ENCODE measurements at regions of chr7 and their contacts with region 1.

Region 1: DNA sequence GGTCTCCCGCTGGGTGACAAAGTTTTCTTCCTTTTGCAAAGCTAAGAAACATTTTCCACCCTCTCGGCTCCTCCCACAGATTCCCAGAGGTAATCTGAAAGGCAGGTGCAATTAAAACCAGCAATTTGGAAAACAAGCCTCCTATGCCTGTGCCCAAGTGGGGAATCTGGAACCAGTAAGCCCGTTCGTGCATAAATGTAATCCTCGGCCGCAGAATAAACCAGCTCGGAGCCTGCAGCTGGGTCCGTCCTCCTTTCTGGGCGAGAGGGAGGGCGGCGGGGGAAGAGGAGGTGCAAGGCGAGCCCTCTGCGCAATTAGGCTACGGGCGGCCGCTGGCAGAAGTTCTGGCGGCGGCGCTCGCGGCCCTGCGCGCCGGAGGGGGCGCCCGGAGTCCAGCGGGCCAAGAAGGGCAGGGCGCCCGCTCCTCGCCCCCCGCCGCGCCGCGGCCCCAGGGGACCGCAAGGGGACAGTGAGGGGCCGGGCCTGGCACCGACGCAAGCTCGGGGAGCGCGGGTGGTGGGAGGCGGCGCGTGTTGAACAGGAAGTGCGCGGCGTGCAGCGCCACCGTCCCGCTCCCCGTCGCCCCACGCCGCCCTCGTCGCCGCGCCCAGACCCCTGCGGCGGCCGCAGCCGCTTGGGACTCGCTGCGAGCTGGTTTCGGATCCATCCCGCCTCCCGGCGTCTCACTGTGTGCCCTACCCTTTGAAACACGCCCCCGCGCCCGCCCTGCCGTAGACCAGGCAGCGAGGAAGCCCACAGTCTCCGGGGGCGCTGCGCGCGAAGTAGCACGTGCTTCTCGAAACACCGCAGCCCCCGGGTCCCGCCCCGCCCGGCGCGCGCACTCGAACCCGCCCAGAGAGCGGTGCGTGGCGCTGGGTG is at the start of gene PRKAG2:
- DNase-seq: peak; percentile 53 to 85 (median 78)
- ATAC-seq: peak; percentile 59
- H3K4me3 ChIP-seq: peak within 1 kb of the TSS; percentile 71 to 95
- H3K4me3 Mint-ChIP-seq: peak within 1 kb of the TSS; percentile 97
- H3K27ac ChIP-seq: peak within 1 kb of the TSS; percentile 53 to 67
- H3K27ac Mint-ChIP-seq: peak within 1 kb of the TSS; percentile 92
- H3K4me1 ChIP-seq: peaks cover 20% of the 10 kb centered on the region
- H3K4me1 Mint-ChIP-seq: peaks cover 25% of the 10 kb centered on the region
- H3K27me3 ChIP-seq: no peaks in the 10 kb centered on the region
- H3K27me3 Mint-ChIP-seq: no peaks in the 10 kb centered on the region
- CTCF ChIP-seq: peak; percentile 27
- total RNA-seq, gene PRKAG2: 41.3 to 41.8 TPM

Region 2: DNA sequence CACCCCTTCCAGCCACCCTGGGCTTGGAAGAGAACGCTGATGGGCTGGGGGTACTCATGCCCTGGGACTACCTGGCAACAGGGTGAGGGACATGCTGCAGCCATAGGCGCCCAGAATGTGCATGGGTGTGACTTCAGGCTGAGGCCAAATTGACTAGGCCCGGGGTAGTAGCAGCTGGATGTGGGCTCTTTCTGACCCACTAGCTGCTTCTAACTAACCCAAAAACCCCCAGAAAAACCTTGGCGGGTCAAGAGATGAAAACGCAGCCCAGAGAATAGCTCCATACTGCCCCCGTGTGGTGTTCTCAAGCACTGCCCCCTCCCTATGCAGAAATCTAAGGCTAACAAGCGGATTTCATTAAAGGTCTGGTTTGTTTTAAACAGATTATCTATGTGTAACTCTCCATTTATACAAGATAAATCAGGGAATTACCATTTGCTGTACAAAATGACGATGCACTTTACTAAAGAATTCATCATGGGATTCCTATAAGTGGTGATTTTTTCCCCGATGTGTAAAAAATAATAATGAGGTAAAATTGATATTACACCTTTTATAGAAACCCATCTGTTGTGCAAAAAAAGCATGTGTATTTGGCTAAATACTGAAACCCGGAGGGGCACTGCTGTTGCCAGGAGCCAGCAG is 632.8 kb before region 1 on chr7:
- CTCF ChIA-PET with region 1: no interaction called
- POLR2A ChIA-PET with region 1: no interaction called
- intact Hi-C with region 1: loop called in 1 of 2 experiments (anchors 10 kb)
- DNase-seq: peak in 5 of 9 experiments; percentile 44 to 79 (median 67)
- ATAC-seq: peak; percentile 30
- H3K4me3 ChIP-seq: no peak overlapping the region
- H3K4me3 Mint-ChIP-seq: peak overlapping the region; percentile 70
- H3K27ac ChIP-seq: no peak overlapping the region
- H3K27ac Mint-ChIP-seq: no peak overlapping the region
- H3K4me1 ChIP-seq: peaks cover 40% of the 10 kb centered on the region
- H3K4me1 Mint-ChIP-seq: peaks cover 41% of the 10 kb centered on the region
- H3K27me3 ChIP-seq: peaks cover 0 to 19% of the 10 kb centered on the region in 2 experiments
- H3K27me3 Mint-ChIP-seq: peaks cover 2% of the 10 kb centered on the region
- CTCF ChIP-seq: peak; percentile 72

Region 3: DNA sequence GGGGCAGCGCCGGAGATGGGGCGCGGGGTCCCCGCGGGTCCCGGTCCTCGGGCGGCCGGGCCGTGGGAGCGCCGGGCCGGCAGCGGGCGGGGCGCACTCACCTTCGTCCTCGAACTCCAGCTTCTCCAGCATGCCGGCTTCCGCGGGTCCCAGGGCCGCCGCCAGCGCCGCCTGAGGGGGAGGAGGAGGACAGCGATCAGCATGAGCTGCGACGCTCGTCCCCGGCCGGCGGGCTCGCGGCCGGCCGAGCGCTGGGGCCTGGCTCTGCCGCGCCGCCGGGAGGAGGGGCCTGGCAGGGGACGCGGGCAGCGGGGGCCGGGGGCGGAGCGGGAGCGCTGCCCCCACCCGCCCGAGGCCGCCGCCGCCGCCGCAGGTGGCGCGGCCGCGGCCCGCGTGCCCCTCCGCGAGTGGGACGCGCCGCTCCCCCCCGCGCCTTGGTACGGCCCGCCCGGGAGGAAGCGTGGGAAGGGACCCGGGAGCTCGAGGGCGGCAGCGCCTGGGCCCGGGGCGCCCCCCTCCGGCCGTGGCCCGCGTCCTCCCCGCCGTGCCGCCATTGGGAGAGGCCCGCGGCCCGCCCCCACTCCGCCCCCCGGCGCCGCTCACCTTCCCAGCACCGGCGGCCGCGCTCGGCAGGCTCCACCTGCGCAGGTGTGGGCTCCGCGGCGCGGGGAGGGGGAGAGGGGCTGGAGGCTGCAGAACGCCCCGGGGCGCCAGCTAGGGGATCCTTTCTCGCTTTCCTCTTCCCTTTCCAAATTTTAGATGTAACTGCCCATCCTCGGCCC is 245.0 kb before region 1 on chr7:
- CTCF ChIA-PET with region 1: interaction called, 3 read pairs
- POLR2A ChIA-PET with region 1: interaction called, 11 read pairs
- intact Hi-C with region 1: loop called (anchors 1 to 2 kb)
- DNase-seq: peak; percentile 72 to 95 (median 87)
- ATAC-seq: peak; percentile 82
- H3K4me3 ChIP-seq: peak overlapping the region; percentile 68 to 85
- H3K4me3 Mint-ChIP-seq: peak overlapping the region; percentile 98
- H3K27ac ChIP-seq: peak overlapping the region; percentile 68 to 82
- H3K27ac Mint-ChIP-seq: peak overlapping the region; percentile 98
- H3K4me1 ChIP-seq: peaks cover 18% of the 10 kb centered on the region
- H3K4me1 Mint-ChIP-seq: peaks cover 39% of the 10 kb centered on the region
- H3K27me3 ChIP-seq: no peaks in the 10 kb centered on the region
- H3K27me3 Mint-ChIP-seq: no peaks in the 10 kb centered on the region
- CTCF ChIP-seq: no peak

Region 4: GRCh38 chr7:151782598-151783448 is 94.3 kb before region 1 on chr7:
- CTCF ChIA-PET with region 1: interaction called, 4 read pairs
- POLR2A ChIA-PET with region 1: no interaction called
- intact Hi-C with region 1: loop called in 1 of 2 experiments (anchors 2 kb)
- DNase-seq: peak; percentile 50 to 85 (median 74)
- ATAC-seq: peak; percentile 89
- H3K4me3 ChIP-seq: peak overlapping the region; percentile 44 to 55
- H3K4me3 Mint-ChIP-seq: peak overlapping the region; percentile 87
- H3K27ac ChIP-seq: peak overlapping the region; percentile 29 to 49
- H3K27ac Mint-ChIP-seq: peak overlapping the region; percentile 93
- H3K4me1 ChIP-seq: peaks cover 12% of the 10 kb centered on the region
- H3K4me1 Mint-ChIP-seq: peaks cover 11% of the 10 kb centered on the region
- H3K27me3 ChIP-seq: no peaks in the 10 kb centered on the region
- H3K27me3 Mint-ChIP-seq: no peaks in the 10 kb centered on the region
- CTCF ChIP-seq: peak; percentile 84

Region 5: DNA sequence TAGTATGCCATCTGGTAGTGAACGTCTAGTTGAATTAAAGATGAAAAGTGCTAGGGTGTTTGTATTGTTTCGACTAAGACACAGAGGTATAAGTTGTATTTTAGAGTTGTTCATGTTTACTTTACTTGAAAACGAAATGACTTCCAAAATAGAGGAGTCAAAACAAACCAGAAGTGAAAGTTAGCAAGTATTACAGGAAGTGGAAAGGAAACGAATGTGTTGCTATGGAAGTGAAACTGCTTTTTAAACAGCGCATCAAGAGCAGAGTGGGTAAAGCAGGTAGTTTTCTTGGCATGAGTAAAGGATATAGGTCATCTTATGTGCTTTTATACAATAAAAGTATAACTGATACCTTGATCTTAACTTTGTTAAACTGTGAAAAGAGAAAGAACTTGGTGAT is 59.1 kb after region 1 on chr7:
- CTCF ChIA-PET with region 1: interaction called, 3 read pairs
- POLR2A ChIA-PET with region 1: interaction called, 17 read pairs
- intact Hi-C with region 1: loop called (anchors 1 to 5 kb)
- DNase-seq: peak in 2 of 9 experiments; percentile 61 to 81
- ATAC-seq: peak; percentile 91
- H3K4me3 ChIP-seq: peak overlapping the region; percentile 4 to 24
- H3K4me3 Mint-ChIP-seq: peak overlapping the region; percentile 80
- H3K27ac ChIP-seq: peak overlapping the region; percentile 54 to 77
- H3K27ac Mint-ChIP-seq: peak overlapping the region; percentile 96
- H3K4me1 ChIP-seq: peaks cover 15% of the 10 kb centered on the region
- H3K4me1 Mint-ChIP-seq: peaks cover 17% of the 10 kb centered on the region
- H3K27me3 ChIP-seq: peaks cover 0 to 3% of the 10 kb centered on the region in 2 experiments
- H3K27me3 Mint-ChIP-seq: no peaks in the 10 kb centered on the region
- CTCF ChIP-seq: no peak

Region 6: GRCh38 chr7:152436111-152436930 is 559.2 kb after region 1 on chr7:
- CTCF ChIA-PET with region 1: no interaction called
- POLR2A ChIA-PET with region 1: no interaction called
- intact Hi-C with region 1: loop called in 1 of 2 experiments (anchors 10 kb)
- DNase-seq: peak; percentile 84 to 95 (median 90)
- ATAC-seq: peak; percentile 73
- H3K4me3 ChIP-seq: peak overlapping the region; percentile 59 to 79
- H3K4me3 Mint-ChIP-seq: peak overlapping the region; percentile 88
- H3K27ac ChIP-seq: peak overlapping the region; percentile 86 to 93
- H3K27ac Mint-ChIP-seq: peak overlapping the region; percentile 96
- H3K4me1 ChIP-seq: peaks cover 16% of the 10 kb centered on the region
- H3K4me1 Mint-ChIP-seq: peaks cover 31% of the 10 kb centered on the region
- H3K27me3 ChIP-seq: no peaks in the 10 kb centered on the region
- H3K27me3 Mint-ChIP-seq: no peaks in the 10 kb centered on the region
- CTCF ChIP-seq: no peak

Region 7: GRCh38 chr7:152759949-152760853 is 883.1 kb after region 1 on chr7:
- CTCF ChIA-PET with region 1: no interaction called
- POLR2A ChIA-PET with region 1: no interaction called
- intact Hi-C with region 1: loop called in 1 of 2 experiments (anchors 5 kb)
- DNase-seq: peak in 7 of 9 experiments; percentile 4 to 52 (median 22)
- ATAC-seq: peak; percentile 26
- H3K4me3 ChIP-seq: peak overlapping the region; percentile 58 to 79
- H3K4me3 Mint-ChIP-seq: peak overlapping the region; percentile 94
- H3K27ac ChIP-seq: peak overlapping the region; percentile 58 to 88
- H3K27ac Mint-ChIP-seq: peak overlapping the region; percentile 92
- H3K4me1 ChIP-seq: peaks cover 20% of the 10 kb centered on the region
- H3K4me1 Mint-ChIP-seq: peaks cover 28% of the 10 kb centered on the region
- H3K27me3 ChIP-seq: no peaks in the 10 kb centered on the region
- H3K27me3 Mint-ChIP-seq: no peaks in the 10 kb centered on the region
- CTCF ChIP-seq: no peak